ENCODE measurements at regions of chr2 and their contacts with region 1.

Region 1: GRCh38 chr2:118046634-118047210 is 32.9 kb upstream of the CCDC93 start:
- DNase-seq: no peak
- H3K4me3 Mint-ChIP-seq: no peak overlapping the region
- H3K27ac Mint-ChIP-seq: no peak overlapping the region
- H3K4me1 Mint-ChIP-seq: peaks cover 10% of the 10 kb centered on the region
- H3K27me3 Mint-ChIP-seq: peaks cover 39% of the 10 kb centered on the region

Region 2: GRCh38 chr2:118061135-118061955 is 14.6 kb after region 1 on chr2:
- CTCF ChIA-PET with region 1: interaction called, 19 read pairs
- POLR2A ChIA-PET with region 1: no interaction called
- intact Hi-C with region 1: loop called (anchors 1 kb)
- DNase-seq: no peak
- H3K4me3 Mint-ChIP-seq: no peak overlapping the region
- H3K27ac Mint-ChIP-seq: no peak overlapping the region
- H3K4me1 Mint-ChIP-seq: peaks cover 12% of the 10 kb centered on the region
- H3K27me3 Mint-ChIP-seq: peaks cover 23% of the 10 kb centered on the region

Region 3: GRCh38 chr2:118148809-118149208 is 102.1 kb after region 1 on chr2:
- CTCF ChIA-PET with region 1: interaction called, 7 read pairs
- POLR2A ChIA-PET with region 1: no interaction called
- intact Hi-C with region 1: loop called (anchors 1 kb)
- DNase-seq: no peak
- H3K4me3 Mint-ChIP-seq: no peak overlapping the region
- H3K27ac Mint-ChIP-seq: no peak overlapping the region
- H3K4me1 Mint-ChIP-seq: peaks cover 5% of the 10 kb centered on the region
- H3K27me3 Mint-ChIP-seq: peaks cover 23% of the 10 kb centered on the region

Region 4: GRCh38 chr2:118202707-118203303 is 156.1 kb after region 1 on chr2:
- CTCF ChIA-PET with region 1: interaction called, 7 read pairs
- POLR2A ChIA-PET with region 1: no interaction called
- intact Hi-C with region 1: loop called (anchors 5 kb)
- DNase-seq: peak; percentile 67
- H3K4me3 Mint-ChIP-seq: no peak overlapping the region
- H3K27ac Mint-ChIP-seq: no peak overlapping the region
- H3K4me1 Mint-ChIP-seq: peaks cover 4% of the 10 kb centered on the region
- H3K27me3 Mint-ChIP-seq: peaks cover 17% of the 10 kb centered on the region

Region 5: GRCh38 chr2:118309946-118310680 is 263.4 kb after region 1 on chr2:
- CTCF ChIA-PET with region 1: no interaction called
- POLR2A ChIA-PET with region 1: no interaction called
- intact Hi-C with region 1: loop called (anchors 10 kb)
- DNase-seq: peak; percentile 78
- H3K4me3 Mint-ChIP-seq: peak overlapping the region; percentile 79
- H3K27ac Mint-ChIP-seq: peak overlapping the region; percentile 88
- H3K4me1 Mint-ChIP-seq: peaks cover 8% of the 10 kb centered on the region
- H3K27me3 Mint-ChIP-seq: peaks cover 2% of the 10 kb centered on the region

Region 6: DNA sequence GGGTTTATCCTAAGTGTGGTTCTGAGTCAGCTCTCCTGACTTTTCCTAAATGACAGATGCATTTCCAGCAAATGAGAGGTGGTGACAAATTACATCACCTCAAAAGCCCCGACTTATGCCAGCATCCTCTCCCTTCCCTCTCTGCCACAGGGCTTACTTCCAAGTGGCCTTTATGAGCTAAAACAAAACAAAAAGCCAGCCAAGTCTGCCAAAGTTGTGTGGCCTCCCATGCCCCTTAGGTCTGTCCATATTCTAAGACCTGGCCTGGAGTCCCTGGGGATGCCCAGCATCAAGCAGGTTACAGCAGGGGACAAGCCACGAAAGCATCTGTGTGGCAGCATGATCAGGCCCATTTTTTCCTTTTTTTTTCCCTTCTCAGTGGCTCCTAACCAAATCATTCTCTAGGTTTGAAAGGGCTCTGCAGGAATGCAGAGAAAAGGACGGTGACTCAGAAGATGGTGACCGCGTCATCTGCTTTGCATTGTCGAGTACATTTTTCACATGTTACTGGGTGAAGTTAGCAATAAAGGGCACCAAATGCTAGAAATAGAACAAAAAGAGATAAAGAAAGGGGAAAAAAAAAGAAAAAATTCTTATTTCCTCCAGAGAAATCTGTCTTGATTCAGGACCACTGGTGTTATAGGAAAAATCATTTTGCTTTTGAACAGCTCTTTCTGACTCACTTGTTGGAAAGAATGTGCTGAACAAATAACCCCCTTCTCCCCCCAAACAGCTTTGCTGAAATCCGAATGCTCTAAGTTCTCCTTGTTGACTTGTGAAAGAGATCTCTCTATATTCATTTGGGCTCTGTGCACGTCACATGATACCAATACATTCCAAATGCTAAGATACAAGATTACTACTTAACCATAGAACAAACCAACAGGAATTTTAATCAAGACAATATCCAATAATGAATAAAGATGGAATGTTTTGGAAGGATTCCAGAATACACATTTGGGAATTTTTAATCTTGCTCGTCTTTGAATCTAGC is 622.0 kb after region 1 on chr2:
- CTCF ChIA-PET with region 1: no interaction called
- POLR2A ChIA-PET with region 1: no interaction called
- intact Hi-C with region 1: no loop called
- DNase-seq: no peak
- H3K4me3 Mint-ChIP-seq: no peak overlapping the region
- H3K27ac Mint-ChIP-seq: no peak overlapping the region
- H3K4me1 Mint-ChIP-seq: no peaks in the 10 kb centered on the region
- H3K27me3 Mint-ChIP-seq: peaks cover 2% of the 10 kb centered on the region

Region 7: DNA sequence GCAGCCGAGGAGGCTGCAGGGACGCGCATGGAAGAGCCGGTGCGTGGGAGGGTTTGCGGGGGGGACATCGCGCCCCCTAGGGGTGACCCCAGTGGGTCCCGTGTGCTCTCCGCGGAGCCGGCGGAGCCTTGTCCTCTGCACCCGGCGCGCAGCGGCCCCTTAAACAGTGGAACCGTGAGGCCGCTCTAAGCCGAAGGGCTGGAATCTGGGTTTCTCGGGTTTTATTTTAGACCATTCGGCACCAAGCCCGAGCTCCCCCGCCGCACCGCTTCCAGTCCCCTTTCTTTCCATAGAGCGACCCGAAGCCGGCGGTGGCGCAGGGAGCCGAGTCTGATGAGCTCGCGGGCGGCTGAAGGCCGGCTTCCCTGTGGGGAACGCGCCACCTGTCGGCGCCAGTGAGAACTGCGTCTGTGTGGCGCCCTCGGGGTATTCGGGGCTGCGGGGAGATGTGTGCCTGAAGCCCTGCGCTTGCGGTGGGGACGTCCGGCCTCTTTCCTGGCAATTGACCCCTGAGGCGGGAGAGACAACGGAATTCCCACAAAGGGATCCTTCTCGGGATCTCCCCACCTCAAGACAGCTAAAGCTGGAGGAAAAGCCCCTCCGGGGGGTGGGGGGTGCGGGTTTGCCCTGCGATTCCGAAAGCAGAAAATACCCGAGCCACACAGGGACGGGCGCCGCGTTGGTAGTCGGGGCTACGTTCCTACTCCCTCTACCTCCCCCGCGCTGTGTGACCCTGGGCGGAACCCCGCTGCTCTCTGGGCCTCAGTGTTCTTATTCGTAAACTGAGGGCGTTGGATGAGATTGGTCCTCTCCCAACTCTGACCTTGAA is 808.9 kb after region 1 on chr2:
- CTCF ChIA-PET with region 1: interaction called, 19 read pairs
- POLR2A ChIA-PET with region 1: no interaction called
- intact Hi-C with region 1: loop called (anchors 1 kb)
- DNase-seq: peak; percentile 86
- H3K4me3 Mint-ChIP-seq: peak overlapping the region; percentile 32
- H3K27ac Mint-ChIP-seq: no peak overlapping the region
- H3K4me1 Mint-ChIP-seq: peaks cover 18% of the 10 kb centered on the region
- H3K27me3 Mint-ChIP-seq: peaks cover 74% of the 10 kb centered on the region